H1 (cell line): ENCODE measurements at regions of chr1 and their contacts with region 1.

Region 1: GRCh38 chr1:101238681-101239094 is 1.9 kb downstream of the S1PR1 start:
- DNase-seq: peak; percentile 59 to 96
- H3K4me3 ChIP-seq: peak overlapping the region in 1 of 4 experiments; percentile 58; a peak in 1 of 8 replicates
- H3K27ac ChIP-seq: no peak overlapping the region
- H3K4me1 ChIP-seq: peaks cover 0 to 10% (median 6%) of the 10 kb centered on the region in 4 experiments; a peak in 5 of 7 replicates
- H3K27me3 ChIP-seq: peaks cover 0 to 27% (median 13%) of the 10 kb centered on the region in 4 experiments; a peak in 5 of 7 replicates
- CTCF ChIP-seq: peak; percentile 83 to 93 (median 89)
- EP300 ChIP-seq: no peak
- POLR2A ChIP-seq: no peak
- RAD21 ChIP-seq: peak; percentile 77 to 82

Region 2: GRCh38 chr1:101136739-101137138 is 101.9 kb before region 1 on chr1:
- CTCF ChIA-PET with region 1: interaction called, 39 read pairs
- POLR2A ChIA-PET with region 1: no interaction called
- DNase-seq: no peak
- H3K4me3 ChIP-seq: peak overlapping the region in 1 of 4 experiments; percentile 42; a peak in 1 of 8 replicates
- H3K27ac ChIP-seq: no peak overlapping the region
- H3K4me1 ChIP-seq: peaks cover 0 to 10% (median 1%) of the 10 kb centered on the region in 4 experiments; a peak in 2 of 7 replicates
- H3K27me3 ChIP-seq: no peaks in the 10 kb centered on the region
- CTCF ChIP-seq: peak in 2 of 3 experiments; percentile 38 to 53; a peak in 2 of 4 replicates
- EP300 ChIP-seq: no peak
- POLR2A ChIP-seq: no peak
- RAD21 ChIP-seq: peak; percentile 73

Region 3: GRCh38 chr1:101228424-101229134 is 10.1 kb before region 1 on chr1:
- CTCF ChIA-PET with region 1: interaction called, 17 read pairs
- POLR2A ChIA-PET with region 1: no interaction called
- DNase-seq: no peak
- H3K4me3 ChIP-seq: no peak overlapping the region
- H3K27ac ChIP-seq: no peak overlapping the region
- H3K4me1 ChIP-seq: no peaks in the 10 kb centered on the region
- H3K27me3 ChIP-seq: no peaks in the 10 kb centered on the region
- CTCF ChIP-seq: no peak
- EP300 ChIP-seq: no peak
- POLR2A ChIP-seq: no peak
- RAD21 ChIP-seq: no peak

Region 4: DNA sequence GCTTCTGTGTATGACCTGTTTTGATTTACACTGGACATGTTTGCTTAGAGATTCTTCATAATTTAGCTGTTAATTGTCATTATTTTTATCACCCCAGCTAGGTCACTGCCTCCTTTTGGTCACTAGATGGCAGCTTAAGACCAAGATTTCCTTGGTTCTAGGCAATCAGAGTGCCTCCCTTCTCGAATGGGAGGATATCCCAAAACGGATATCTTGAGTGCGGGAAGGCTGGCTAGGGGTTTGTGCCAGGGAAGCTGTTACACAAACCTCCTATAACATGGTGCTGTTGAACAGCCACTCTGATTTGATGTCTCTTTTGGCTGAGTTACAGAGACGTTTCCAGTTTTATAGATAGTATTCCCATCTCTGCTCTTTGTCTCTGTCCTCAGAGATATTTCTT is 281.6 kb after region 1 on chr1:
- CTCF ChIA-PET with region 1: no interaction called
- POLR2A ChIA-PET with region 1: no interaction called
- DNase-seq: peak; percentile 15 to 45
- H3K4me3 ChIP-seq: no peak overlapping the region
- H3K27ac ChIP-seq: no peak overlapping the region
- H3K4me1 ChIP-seq: no peaks in the 10 kb centered on the region
- H3K27me3 ChIP-seq: peaks cover 0 to 1% (median 0%) of the 10 kb centered on the region in 4 experiments; a peak in 1 of 7 replicates
- CTCF ChIP-seq: peak in 2 of 3 experiments; percentile 67 to 82; a peak in 3 of 4 replicates
- EP300 ChIP-seq: no peak
- POLR2A ChIP-seq: no peak
- RAD21 ChIP-seq: peak; percentile 90 to 91